Activated B cell treated with CpG ODN at 0.5 μM for 24 hours (primary cell): ENCODE measurements at regions of chr5 and their contacts with region 1.

Region 1: DNA sequence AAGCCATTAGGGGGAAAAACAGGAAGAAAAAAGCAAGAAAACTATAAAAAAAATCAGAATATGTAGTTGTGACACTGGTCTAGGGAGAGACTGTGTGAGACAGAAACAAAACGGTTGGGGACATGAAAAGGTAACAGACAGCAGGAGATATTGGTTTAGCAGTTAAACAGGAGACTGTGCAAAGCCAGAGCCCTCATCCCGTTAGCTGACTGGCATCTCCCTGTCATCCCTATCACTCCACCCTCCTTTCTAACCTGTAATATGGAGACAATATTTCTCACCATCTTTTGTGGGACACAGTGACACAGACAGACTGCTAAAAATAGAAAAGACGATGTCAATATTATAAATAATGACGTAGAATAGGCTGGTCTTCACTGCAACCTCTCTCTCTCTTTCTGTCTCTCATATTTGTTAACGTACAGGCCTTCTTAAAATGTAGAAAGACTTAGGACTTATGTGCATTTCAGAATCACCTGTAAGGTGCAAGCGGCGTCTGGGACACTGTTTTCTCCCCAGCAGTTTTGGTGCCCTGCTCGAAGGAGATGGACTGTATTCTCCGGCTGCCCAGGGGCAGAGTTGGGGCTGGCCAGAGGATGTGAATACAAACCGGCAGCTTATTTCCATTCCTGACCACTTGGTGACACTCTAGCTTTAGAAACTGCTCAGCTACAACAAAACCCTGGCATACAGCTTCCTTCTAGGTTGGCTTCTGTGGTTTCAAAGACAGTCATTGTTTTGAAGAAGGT is 190.6 kb downstream of the MAT2B start:
- DNase-seq: no peak
- ATAC-seq: peak; percentile 95
- H3K4me3 Mint-ChIP-seq: no peak overlapping the region
- H3K27ac Mint-ChIP-seq: no peak overlapping the region
- H3K4me1 Mint-ChIP-seq: peaks cover 9% of the 10 kb centered on the region
- H3K27me3 Mint-ChIP-seq: peaks cover 2% of the 10 kb centered on the region
- CTCF ChIP-seq: peak; percentile 73

Region 2: DNA sequence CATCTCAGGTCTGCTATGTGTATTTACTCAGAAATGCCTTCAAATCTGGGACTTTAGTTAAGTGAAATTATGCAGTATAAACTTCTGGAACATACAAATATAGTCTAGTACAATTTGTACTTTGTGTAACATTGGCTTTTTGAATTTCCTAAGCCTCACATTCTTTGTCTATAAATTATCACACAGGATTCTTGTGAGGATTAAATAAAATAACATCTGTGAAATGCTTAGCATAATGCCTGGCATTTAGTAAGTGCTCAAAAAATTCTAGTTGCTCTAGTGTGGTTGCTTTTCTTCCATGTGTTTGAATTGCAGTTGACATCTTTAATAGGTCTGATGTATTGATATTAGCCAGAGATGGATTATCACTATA is 233.0 kb before region 1 on chr5:
- CTCF ChIA-PET with region 1: no interaction called
- POLR2A ChIA-PET with region 1: no interaction called
- intact Hi-C with region 1: no loop called
- DNase-seq: no peak
- ATAC-seq: no peak
- H3K4me3 Mint-ChIP-seq: no peak overlapping the region
- H3K27ac Mint-ChIP-seq: no peak overlapping the region
- H3K4me1 Mint-ChIP-seq: peaks cover 33% of the 10 kb centered on the region
- H3K27me3 Mint-ChIP-seq: no peaks in the 10 kb centered on the region
- CTCF ChIP-seq: no peak

Region 3: GRCh38 chr5:163564321-163564938 is 131.6 kb before region 1 on chr5:
- CTCF ChIA-PET with region 1: interaction called, 8 read pairs
- POLR2A ChIA-PET with region 1: no interaction called
- intact Hi-C with region 1: loop called (anchors 1 kb)
- DNase-seq: peak; percentile 21
- ATAC-seq: peak; percentile 64
- H3K4me3 Mint-ChIP-seq: no peak overlapping the region
- H3K27ac Mint-ChIP-seq: no peak overlapping the region
- H3K4me1 Mint-ChIP-seq: peaks cover 24% of the 10 kb centered on the region
- H3K27me3 Mint-ChIP-seq: peaks cover 38% of the 10 kb centered on the region
- CTCF ChIP-seq: peak; percentile 90

Region 4: GRCh38 chr5:163944738-163945137 is 248.7 kb after region 1 on chr5:
- CTCF ChIA-PET with region 1: no interaction called
- POLR2A ChIA-PET with region 1: no interaction called
- intact Hi-C with region 1: loop called (anchors 1 kb)
- DNase-seq: no peak
- ATAC-seq: no peak
- H3K4me3 Mint-ChIP-seq: no peak overlapping the region
- H3K27ac Mint-ChIP-seq: no peak overlapping the region
- H3K4me1 Mint-ChIP-seq: peaks cover 26% of the 10 kb centered on the region
- H3K27me3 Mint-ChIP-seq: no peaks in the 10 kb centered on the region
- CTCF ChIP-seq: no peak

Region 5: GRCh38 chr5:164235300-164235891 is 539.4 kb after region 1 on chr5:
- CTCF ChIA-PET with region 1: no interaction called
- POLR2A ChIA-PET with region 1: no interaction called
- intact Hi-C with region 1: loop called (anchors 10 kb)
- DNase-seq: no peak
- ATAC-seq: no peak
- H3K4me3 Mint-ChIP-seq: no peak overlapping the region
- H3K27ac Mint-ChIP-seq: no peak overlapping the region
- H3K4me1 Mint-ChIP-seq: no peaks in the 10 kb centered on the region
- H3K27me3 Mint-ChIP-seq: no peaks in the 10 kb centered on the region
- CTCF ChIP-seq: no peak

Region 6: GRCh38 chr5:164504141-164504772 is 808.3 kb after region 1 on chr5:
- CTCF ChIA-PET with region 1: interaction called, 121 read pairs
- POLR2A ChIA-PET with region 1: no interaction called
- intact Hi-C with region 1: loop called (anchors 1 kb)
- DNase-seq: no peak
- ATAC-seq: peak; percentile 40
- H3K4me3 Mint-ChIP-seq: no peak overlapping the region
- H3K27ac Mint-ChIP-seq: no peak overlapping the region
- H3K4me1 Mint-ChIP-seq: peaks cover 6% of the 10 kb centered on the region
- H3K27me3 Mint-ChIP-seq: peaks cover 3% of the 10 kb centered on the region
- CTCF ChIP-seq: peak; percentile 69

Region 7: DNA sequence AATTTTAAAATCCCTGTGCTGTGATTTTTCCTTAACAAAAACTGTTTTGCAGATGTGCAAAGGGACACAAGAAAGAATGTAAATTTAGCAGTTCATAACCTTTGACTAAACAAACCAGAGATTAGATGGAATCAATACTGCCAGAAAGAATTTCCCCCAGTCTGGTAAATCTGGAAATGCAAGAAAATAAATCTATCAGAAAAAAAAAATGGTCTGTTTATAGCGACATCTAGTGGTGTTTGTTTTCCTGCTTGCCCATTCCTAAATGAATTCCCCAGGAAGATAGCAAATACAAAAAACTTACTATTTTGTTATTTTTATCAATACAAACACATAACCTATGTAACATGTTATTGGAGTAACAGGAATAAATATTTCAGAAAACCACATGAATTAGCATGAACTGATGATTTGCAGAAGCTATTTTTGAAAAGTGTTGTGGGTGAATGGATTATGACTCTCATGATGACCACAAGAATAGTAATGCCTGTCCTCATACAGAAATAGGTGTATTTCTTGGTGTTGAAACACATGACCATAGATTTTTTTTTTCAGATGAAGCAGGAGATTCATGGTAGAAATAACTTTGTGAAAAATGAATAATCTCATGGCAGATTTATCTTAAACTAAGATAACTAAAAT is 1513.2 kb after region 1 on chr5:
- CTCF ChIA-PET with region 1: interaction called, 10 read pairs
- POLR2A ChIA-PET with region 1: no interaction called
- intact Hi-C with region 1: no loop called
- DNase-seq: no peak
- ATAC-seq: no peak
- H3K4me3 Mint-ChIP-seq: no peak overlapping the region
- H3K27ac Mint-ChIP-seq: no peak overlapping the region
- H3K4me1 Mint-ChIP-seq: no peaks in the 10 kb centered on the region
- H3K27me3 Mint-ChIP-seq: no peaks in the 10 kb centered on the region
- CTCF ChIP-seq: peak; percentile 32